Activated CD8-positive, alpha-beta memory T cell treated with anti-CD3 and anti-CD28 coated beads, Interleukin-2, amount 10 ng/mL, durations not matched to agents 7 days and 5 days (primary cell): ENCODE measurements at regions of chr7 and their contacts with region 1.

Region 1: DNA sequence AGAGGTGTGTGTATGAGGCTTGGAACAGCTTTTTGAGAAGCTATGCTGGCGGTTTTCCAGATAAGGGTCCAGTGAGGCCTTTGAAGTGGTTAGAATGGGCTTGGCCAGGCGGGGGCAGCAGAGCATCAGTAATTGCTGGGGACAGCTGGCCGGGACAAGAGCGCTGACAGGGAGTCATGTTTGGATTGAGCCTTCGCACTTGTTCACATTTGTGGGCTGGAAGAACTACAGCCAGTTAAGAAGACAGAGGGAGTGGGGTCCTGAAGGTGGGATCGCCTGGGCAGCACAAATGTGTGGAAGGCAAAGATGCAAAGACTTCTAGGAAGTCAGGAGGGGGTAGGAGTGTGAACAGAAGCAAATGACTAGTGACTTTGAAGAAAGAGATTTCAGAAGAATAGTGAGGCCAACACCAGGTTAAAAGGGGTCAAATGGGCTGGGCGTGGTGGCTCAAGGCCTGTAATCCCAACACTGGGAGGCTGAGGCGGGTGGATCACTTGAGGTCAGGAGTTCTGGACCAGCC is 12.7 kb upstream of the SDHAF3 start:
- DNase-seq: peak; percentile 77
- ATAC-seq: peak; percentile 74
- H3K4me3 Mint-ChIP-seq: no peak overlapping the region
- H3K27ac Mint-ChIP-seq: no peak overlapping the region
- H3K4me1 Mint-ChIP-seq: no peaks in the 10 kb centered on the region
- H3K27me3 Mint-ChIP-seq: peaks cover 26% of the 10 kb centered on the region

Region 2: DNA sequence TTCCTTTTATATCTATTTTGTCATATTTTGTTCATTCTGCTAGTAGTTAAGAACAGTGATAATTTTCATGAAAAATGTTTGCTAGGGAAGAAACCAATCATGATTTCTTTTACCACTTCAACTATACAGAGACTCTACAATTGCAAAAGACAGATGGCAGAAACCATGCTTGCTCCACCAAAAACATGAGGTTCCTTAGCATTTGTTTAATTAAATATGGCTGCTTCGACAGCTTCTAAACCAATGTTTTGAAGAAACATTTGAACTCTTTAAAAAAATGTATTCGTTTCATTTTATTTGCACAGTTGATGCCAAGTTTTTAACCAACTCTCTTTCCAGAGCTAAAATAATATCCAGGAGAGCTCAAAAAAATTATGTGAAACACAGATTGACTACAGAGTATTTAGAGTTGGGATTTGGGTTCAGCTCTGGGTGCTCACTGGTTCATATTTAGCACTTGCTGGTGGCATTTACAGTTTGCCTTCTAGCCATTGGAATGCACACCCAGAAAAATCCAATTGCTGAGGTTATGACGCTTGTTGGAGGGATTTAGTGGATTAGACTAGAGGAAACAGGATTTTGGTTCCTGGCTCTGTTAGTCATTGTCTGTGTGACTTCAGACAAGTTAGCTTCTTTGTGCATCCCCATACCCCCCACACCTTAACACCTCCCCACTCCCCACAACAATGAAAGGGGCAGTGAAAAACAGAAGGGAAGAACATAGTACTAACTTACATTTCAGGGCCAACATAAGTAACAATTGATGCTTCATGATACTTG is 23.1 kb before region 1 on chr7:
- CTCF ChIA-PET with region 1: no interaction called
- DNase-seq: no peak
- ATAC-seq: no peak
- H3K4me3 Mint-ChIP-seq: no peak overlapping the region
- H3K27ac Mint-ChIP-seq: no peak overlapping the region
- H3K4me1 Mint-ChIP-seq: no peaks in the 10 kb centered on the region
- H3K27me3 Mint-ChIP-seq: peaks cover 16% of the 10 kb centered on the region

Region 3: DNA sequence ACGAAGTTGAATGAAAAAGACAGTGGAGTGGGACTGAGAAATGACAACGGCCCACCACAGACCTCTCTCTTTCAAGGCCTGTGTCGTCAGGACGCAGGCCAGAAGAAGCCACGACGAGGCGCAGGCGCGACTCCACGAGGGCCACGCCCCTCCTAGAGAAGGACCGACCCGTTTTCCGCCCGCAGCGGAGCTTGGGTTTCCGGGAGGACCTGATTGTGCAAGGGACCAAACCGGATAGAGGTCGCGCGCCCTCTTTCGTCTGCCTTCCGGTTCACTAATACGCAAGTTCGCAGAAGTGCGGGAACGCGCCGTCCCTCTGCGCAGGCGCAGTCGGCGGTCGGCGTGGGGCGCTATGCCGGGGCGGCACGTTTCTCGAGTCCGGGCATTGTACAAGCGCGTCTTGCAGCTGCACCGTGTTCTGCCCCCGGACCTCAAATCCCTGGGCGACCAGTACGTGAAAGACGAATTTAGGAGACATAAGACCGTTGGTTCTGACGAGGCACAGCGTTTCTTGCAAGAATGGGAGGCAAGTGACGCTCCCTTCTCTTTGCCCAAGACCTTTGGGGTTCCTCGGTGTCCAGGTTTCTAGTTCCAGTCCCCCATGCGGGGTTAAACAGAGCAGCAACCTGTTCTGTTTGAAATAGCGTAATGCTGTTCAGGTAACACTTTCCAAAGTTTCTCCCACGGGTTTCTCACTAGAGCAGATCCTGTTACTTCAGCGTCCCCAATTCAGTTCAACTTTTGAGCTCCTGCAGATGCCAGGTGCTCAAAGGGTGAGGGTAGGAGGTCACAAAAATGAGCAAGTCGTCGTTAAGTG is 12.8 kb after region 1 on chr7 and contains the start of gene SDHAF3:
- CTCF ChIA-PET with region 1: interaction called, 15 read pairs
- DNase-seq: peak; percentile 99
- ATAC-seq: peak; percentile 96
- H3K4me3 Mint-ChIP-seq: peak within 1 kb of the TSS; percentile 92
- H3K27ac Mint-ChIP-seq: peak within 1 kb of the TSS; percentile 93
- H3K4me1 Mint-ChIP-seq: peaks cover 28% of the 10 kb centered on the region
- H3K27me3 Mint-ChIP-seq: no peaks in the 10 kb centered on the region
- total RNA-seq, gene SDHAF3: 14.7 to 17.9 TPM

Region 4: DNA sequence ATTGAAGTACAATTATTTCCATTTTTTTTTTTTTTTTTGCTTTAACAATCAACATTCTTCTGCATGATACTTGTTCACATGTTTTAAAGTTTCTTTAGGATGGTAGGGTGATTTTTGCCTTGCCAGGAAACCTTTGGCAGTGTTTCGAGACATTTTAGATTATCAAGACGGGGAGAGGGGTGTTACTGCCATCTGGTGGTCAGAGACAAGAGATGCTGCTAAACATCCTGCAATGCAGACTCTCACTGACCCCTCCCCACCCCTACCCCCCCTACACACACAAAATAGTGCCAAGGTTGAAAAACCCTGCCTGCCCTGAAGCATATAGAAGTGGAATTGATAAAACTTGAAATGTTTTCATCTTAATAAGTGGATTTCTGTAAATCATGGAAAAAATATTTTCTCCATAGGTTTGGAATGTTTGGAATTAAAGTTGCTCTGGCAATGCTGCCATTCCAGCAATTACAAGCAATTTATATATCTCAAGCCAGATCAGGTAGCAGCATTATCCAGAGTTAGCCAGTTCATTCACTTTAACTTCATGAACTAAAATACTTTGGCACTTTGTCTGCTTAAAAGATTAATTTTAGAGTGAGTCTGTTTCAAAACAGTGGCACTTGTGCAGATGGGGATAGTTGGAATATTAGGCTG is 74.8 kb after region 1 on chr7:
- CTCF ChIA-PET with region 1: interaction called, 13 read pairs
- DNase-seq: peak; percentile 55
- ATAC-seq: peak; percentile 55
- H3K4me3 Mint-ChIP-seq: no peak overlapping the region
- H3K27ac Mint-ChIP-seq: no peak overlapping the region
- H3K4me1 Mint-ChIP-seq: peaks cover 1% of the 10 kb centered on the region
- H3K27me3 Mint-ChIP-seq: no peaks in the 10 kb centered on the region

Region 5: GRCh38 chr7:97835296-97836138 is 730.7 kb after region 1 on chr7:
- CTCF ChIA-PET with region 1: interaction called, 18 read pairs
- DNase-seq: peak; percentile 72
- ATAC-seq: peak; percentile 82
- H3K4me3 Mint-ChIP-seq: no peak overlapping the region
- H3K27ac Mint-ChIP-seq: no peak overlapping the region
- H3K4me1 Mint-ChIP-seq: no peaks in the 10 kb centered on the region
- H3K27me3 Mint-ChIP-seq: peaks cover 41% of the 10 kb centered on the region